H1 (cell line): ENCODE measurements at regions of chr7 and their contacts with region 1.

Region 1: DNA sequence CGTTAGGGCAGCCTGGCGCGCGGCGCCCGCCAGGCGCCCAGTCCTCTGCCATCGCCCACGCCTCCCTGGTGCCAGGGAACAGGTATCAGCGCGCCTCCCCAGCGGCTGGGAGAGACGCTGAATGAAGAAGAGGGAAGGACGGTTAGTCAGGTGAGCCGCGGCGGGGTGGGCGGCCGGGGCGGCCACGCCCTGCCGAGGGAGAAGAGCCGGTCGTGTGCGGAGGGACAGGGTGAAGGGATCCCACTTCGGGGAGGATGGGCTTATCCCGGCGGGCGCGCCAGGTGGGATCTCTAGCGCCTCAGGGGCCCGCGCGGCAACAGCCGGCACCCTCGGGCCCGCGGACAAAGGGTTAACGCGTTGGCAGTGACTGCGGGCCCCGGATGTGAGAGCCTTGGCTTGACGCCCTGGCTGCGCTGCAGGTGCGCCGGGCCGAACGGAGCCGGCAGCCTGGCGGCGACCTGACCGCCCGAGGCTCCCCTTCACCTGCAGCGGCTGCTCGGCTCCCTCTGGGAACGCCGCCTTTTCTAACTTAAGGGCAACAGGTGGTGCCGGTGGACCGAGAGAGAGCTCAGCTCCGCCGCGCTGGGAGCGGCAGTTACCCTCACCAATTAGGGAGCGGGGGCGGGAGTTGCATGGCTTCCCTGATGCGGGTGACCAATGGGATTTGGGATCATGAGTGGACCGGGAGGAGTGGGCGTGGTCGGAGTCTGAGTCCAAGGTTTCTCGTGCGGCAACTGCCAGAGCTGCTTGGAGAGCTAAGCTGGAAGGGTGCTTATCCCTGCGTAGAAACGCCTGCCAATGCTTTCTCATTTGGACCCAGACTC is at the start of gene ARL4A:
- DNase-seq: peak; percentile 94 to 98
- H3K4me3 ChIP-seq: peak within 1 kb of the TSS; percentile 49 to 95 (median 88)
- H3K27ac ChIP-seq: peak within 1 kb of the TSS; percentile 64
- H3K4me1 ChIP-seq: peaks cover 0 to 7% (median 3%) of the 10 kb centered on the region in 4 experiments; a peak in 4 of 7 replicates
- H3K27me3 ChIP-seq: no peaks in the 10 kb centered on the region; a peak in 1 of 7 replicates
- CTCF ChIP-seq: peak; percentile 55 to 61 (median 61)
- EP300 ChIP-seq: no peak
- POLR2A ChIP-seq: peak; percentile 88 to 89
- RAD21 ChIP-seq: peak; percentile 83 to 89
- total RNA-seq, gene ARL4A: 29.2 and 31.5 TPM in 2 replicates

Region 2: DNA sequence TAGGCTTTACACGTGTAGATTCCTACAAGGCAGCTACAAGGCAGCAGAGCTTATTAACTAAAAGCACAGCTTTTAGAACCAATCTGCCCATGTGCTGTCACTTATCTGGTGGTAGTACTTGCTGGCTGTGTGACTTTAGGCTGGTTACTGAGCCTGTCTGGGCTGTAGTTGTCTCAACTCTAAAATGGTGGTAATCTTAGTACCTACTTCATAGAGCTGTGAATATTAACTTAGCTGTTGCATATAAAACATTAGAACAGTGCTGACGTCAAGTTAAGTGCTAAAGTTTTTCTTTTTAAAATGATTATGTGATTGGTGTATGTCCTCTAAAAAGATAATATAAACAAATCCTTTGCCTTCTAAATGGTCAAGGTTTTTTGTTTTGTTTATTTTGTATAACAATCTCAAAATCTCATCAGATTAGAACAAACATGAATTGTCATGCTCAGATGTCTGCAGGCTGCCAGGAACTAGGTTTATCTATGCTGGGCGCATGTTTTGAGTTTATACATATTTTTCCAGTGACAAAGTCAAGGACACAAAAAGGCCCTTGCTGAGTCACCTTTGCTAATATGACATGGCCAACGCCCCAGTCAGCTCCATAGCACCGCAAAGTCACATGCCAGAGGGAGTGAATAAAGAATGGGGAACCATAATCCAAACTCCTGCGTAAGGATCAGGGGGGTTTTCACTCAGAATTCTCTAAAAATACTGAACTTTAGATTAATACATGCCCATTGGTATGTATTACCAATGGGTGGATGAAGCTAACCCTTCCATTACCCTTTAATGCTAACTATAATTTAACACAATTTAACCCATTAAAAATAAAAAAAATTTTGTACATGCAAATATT is 39.5 kb before region 1 on chr7:
- CTCF ChIA-PET with region 1: interaction called, 19 read pairs
- POLR2A ChIA-PET with region 1: no interaction called
- DNase-seq: no peak
- H3K4me3 ChIP-seq: no peak overlapping the region
- H3K27ac ChIP-seq: no peak overlapping the region
- H3K4me1 ChIP-seq: peaks cover 0 to 8% (median 1%) of the 10 kb centered on the region in 4 experiments; a peak in 4 of 7 replicates
- H3K27me3 ChIP-seq: no peaks in the 10 kb centered on the region
- CTCF ChIP-seq: no peak
- EP300 ChIP-seq: no peak
- POLR2A ChIP-seq: no peak
- RAD21 ChIP-seq: no peak

Region 3: DNA sequence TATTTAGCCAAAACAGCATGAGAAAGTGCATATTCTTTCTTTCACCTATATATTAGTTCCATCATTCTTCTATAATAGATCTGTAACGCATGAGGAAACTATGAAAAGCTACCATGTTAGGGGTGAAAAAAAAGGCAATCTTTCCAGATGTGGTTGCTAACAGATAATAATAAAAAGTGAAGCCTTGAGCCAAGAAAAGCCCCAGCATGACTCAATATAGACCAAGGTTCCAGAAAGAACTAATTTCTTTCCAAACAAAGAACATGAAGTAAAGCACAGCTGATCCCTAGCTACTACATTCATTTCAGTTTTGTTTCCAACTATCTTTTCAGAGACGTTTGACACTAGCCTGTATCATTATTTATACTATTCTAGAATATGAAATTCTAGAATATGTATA is 16.8 kb after region 1 on chr7:
- CTCF ChIA-PET with region 1: interaction called, 23 read pairs
- POLR2A ChIA-PET with region 1: interaction called, 5 read pairs
- DNase-seq: no peak
- H3K4me3 ChIP-seq: no peak overlapping the region
- H3K27ac ChIP-seq: no peak overlapping the region
- H3K4me1 ChIP-seq: peaks cover 0 to 5% (median 0%) of the 10 kb centered on the region in 4 experiments; a peak in 2 of 7 replicates
- H3K27me3 ChIP-seq: no peaks in the 10 kb centered on the region
- CTCF ChIP-seq: no peak
- EP300 ChIP-seq: no peak
- POLR2A ChIP-seq: no peak
- RAD21 ChIP-seq: no peak

Region 4: GRCh38 chr7:12783421-12784095 is 96.5 kb after region 1 on chr7:
- CTCF ChIA-PET with region 1: no interaction called
- POLR2A ChIA-PET with region 1: no interaction called
- DNase-seq: no peak
- H3K4me3 ChIP-seq: no peak overlapping the region
- H3K27ac ChIP-seq: no peak overlapping the region
- H3K4me1 ChIP-seq: no peaks in the 10 kb centered on the region
- H3K27me3 ChIP-seq: no peaks in the 10 kb centered on the region
- CTCF ChIP-seq: no peak
- EP300 ChIP-seq: no peak
- POLR2A ChIP-seq: no peak
- RAD21 ChIP-seq: no peak

Region 5: DNA sequence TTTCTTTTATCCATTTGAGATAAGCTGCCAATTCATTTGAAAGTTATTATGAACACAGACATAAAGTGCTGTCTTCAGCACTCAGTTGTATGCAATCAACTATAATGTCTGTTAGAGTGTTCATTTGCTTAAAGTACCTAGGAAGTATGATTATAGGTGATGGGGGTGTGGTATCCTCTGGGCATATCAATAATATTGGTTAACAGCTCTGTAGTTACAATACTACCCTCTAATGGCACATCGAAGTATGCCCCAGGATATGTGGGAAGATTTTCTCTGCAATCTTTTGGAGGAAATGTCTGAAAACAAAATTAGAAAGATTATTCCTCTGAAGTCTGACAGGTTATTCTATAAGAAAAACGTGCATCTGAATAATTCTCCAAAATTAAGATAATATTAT is 430.0 kb after region 1 on chr7:
- CTCF ChIA-PET with region 1: interaction called, 82 read pairs
- POLR2A ChIA-PET with region 1: interaction called, 4 read pairs
- DNase-seq: no peak
- H3K4me3 ChIP-seq: no peak overlapping the region
- H3K27ac ChIP-seq: no peak overlapping the region
- H3K4me1 ChIP-seq: peaks cover 0 to 2% (median 0%) of the 10 kb centered on the region in 4 experiments; a peak in 1 of 7 replicates
- H3K27me3 ChIP-seq: no peaks in the 10 kb centered on the region
- CTCF ChIP-seq: peak in 2 of 3 experiments; percentile 34 to 48; a peak in 2 of 4 replicates
- EP300 ChIP-seq: no peak
- POLR2A ChIP-seq: no peak
- RAD21 ChIP-seq: peak; percentile 80 to 85